Esophagus muscularis mucosa (tissue), 4 donors: ENCODE measurements at regions of chr18 and their contacts with region 1.

Region 1: DNA sequence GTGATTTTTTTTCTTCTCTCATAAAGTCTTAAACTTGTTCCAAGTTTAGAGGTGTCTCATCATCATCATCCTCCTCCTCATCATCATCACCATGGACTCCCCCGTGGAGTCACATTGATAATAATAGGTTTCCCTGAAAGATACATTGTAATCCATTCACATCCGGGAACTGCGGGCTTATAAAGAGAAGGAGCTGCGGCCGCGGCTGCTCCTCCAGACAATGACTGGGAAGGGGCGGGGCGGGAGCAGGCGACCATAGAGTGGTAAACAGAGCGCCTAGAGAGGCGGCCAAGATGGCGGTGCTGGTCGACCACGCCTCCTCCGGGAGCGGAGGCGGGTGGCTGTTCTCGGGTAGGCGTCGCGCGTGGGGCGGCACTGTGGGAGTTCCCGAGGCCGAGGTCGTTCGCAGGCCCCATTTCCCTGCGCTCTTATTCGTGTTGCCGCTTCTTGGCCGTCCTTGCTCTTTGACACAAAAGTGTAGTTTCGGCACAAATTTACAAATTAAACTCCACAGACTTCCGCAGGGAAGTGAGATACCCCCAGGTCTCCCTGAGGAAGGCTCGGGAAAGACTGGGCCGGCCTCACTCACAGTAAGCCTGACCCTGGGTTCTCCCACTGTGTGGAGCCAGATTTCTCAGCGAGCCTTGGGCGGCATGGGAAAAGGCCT is 1.8 kb upstream of the TCF4 start:
- DNase-seq: peak; percentile 99
- H3K4me3 ChIP-seq: peak overlapping the region; percentile 69 to 83 (median 72)
- H3K27ac ChIP-seq: peak overlapping the region; percentile 86 to 91 (median 88)
- H3K4me1 ChIP-seq: peaks cover 0 to 27% (median 24%) of the 10 kb centered on the region in 4 donors
- H3K27me3 ChIP-seq: no peaks in the 10 kb centered on the region
- CTCF ChIP-seq: peak in 1 of 3 experiments; percentile 34
- EP300 ChIP-seq: no peak
- POLR2A ChIP-seq: no peak

Region 2: DNA sequence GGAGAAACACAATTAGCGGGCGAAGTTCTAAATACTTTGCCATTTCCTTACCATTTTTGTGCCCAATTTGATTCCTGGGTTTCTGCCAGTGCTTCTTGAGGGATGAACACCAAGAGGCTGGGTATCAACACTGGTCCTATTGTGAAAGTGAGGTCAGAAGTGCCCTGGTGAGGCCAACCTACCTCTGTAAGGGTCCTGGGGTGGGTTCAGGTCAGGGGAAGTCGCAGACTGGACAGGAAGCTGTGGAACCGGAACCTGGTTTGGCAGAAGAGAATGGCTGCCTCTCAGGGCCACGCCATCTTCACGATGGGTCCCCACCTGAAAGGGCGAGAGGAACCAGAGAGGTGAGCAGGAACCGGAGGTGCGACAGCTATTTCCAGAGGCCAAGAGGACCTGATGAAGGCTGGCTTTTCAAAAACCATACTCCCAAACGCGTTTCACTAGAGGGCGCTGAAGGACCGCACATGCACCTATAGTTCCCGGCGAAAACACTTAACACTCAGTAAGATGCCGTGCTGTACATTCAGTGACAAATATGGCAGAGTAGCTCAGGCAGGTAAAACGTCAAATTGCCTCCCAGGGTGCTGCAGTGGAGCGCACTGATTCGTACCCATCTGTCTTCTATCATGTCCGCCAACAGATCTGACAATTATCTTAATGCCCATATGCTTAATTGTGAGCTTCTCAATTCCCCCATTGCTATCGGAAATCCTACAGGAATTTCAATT is 355.2 kb before region 1 on chr18:
- intact Hi-C with region 1: loop called (anchors 10 kb)
- DNase-seq: peak; percentile 94
- H3K4me3 ChIP-seq: peak overlapping the region in 1 of 4 donors; percentile 33
- H3K27ac ChIP-seq: peak overlapping the region in 3 of 4 donors; percentile 21 to 52 (median 40)
- H3K4me1 ChIP-seq: peaks cover 12 to 22% (median 18%) of the 10 kb centered on the region in 4 donors
- H3K27me3 ChIP-seq: no peaks in the 10 kb centered on the region
- CTCF ChIP-seq: peak; percentile 69 to 79 (median 74)
- EP300 ChIP-seq: no peak
- POLR2A ChIP-seq: no peak

Region 3: DNA sequence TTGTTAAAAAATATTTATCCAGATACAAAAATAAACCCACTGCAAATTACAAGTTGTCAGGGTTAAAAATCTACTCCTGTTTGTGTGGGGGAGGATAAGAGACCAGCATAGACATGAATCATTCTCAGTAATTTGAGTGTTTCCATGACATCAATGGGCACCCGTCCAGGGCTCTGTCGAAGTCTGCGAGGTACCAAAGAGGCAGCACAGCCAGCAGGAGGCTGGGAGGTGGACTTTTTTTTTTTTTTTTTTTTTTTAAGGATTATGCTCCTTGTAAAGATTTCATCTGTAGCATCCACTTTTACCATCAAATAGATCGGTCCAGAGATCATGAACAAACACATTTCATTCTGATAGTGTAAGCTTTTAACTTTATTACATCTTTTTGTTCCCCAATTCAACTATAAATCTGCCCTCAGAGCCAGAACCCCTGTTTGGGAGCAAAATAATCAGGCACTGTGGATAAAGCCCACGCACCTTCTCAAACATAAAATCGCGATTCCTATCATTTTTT is 183.8 kb before region 1 on chr18:
- intact Hi-C with region 1: loop called (anchors 5 kb)
- DNase-seq: no peak
- H3K4me3 ChIP-seq: no peak overlapping the region
- H3K27ac ChIP-seq: peak overlapping the region; percentile 40 to 78 (median 66)
- H3K4me1 ChIP-seq: peaks cover 15 to 41% (median 39%) of the 10 kb centered on the region in 4 donors
- H3K27me3 ChIP-seq: no peaks in the 10 kb centered on the region
- CTCF ChIP-seq: no peak
- EP300 ChIP-seq: no peak
- POLR2A ChIP-seq: no peak

Region 4: DNA sequence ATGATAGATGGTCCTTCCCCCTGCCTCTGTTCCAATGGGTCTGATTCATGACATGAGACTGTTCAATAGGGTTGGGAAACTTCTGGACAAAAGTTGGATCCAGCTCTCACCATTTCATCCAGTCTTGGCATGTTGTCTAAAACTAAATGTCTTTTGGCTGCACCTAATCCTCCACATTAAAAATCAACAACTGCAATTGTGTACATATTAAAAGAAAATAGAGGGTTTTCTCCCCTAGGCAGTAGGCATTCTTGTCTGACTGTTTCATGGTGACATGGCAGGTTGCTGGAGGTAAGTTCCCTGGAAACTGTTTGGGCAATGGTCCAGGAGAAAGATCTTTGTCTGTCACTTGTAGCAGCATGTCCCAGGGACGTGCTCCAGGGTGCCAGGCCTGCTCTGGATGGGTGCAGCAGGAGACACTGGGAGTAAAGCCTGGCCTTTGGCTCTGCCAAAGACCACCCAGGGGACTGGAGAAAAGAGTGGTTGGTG is 137.6 kb before region 1 on chr18:
- intact Hi-C with region 1: no loop called
- DNase-seq: no peak
- H3K4me3 ChIP-seq: no peak overlapping the region
- H3K27ac ChIP-seq: peak overlapping the region in 1 of 4 donors; percentile 3
- H3K4me1 ChIP-seq: peaks cover 5 to 18% (median 11%) of the 10 kb centered on the region in 4 donors
- H3K27me3 ChIP-seq: no peaks in the 10 kb centered on the region
- CTCF ChIP-seq: no peak
- EP300 ChIP-seq: no peak
- POLR2A ChIP-seq: no peak

Region 5: DNA sequence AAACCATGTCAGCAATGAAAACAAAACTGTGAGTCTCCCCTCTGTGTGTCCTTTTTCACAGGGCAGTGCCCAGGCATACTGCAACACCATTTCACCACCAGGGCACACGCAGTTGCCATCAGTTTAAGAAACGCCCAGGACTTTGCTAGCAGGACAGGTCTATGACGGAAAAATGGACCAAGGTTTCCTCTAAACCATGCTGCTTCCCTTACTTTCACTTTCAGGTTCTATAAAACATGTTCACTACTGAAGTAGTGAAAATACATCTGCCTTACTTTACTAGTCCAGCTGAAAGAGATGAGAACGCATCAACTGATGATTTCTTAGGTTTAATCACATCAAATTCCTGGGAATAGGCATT is 112.3 kb before region 1 on chr18:
- intact Hi-C with region 1: loop called (anchors 5 kb)
- DNase-seq: no peak
- H3K4me3 ChIP-seq: peak overlapping the region; percentile 45 to 65 (median 58)
- H3K27ac ChIP-seq: peak overlapping the region; percentile 75 to 80 (median 78)
- H3K4me1 ChIP-seq: peaks cover 0 to 19% (median 13%) of the 10 kb centered on the region in 4 donors
- H3K27me3 ChIP-seq: no peaks in the 10 kb centered on the region
- CTCF ChIP-seq: peak in 1 of 3 experiments; percentile 46
- EP300 ChIP-seq: no peak
- POLR2A ChIP-seq: no peak

Region 6: GRCh38 chr18:56650944-56651770 is 1061.4 kb after region 1 on chr18 and contains the start of gene WDR7:
- intact Hi-C with region 1: loop called (anchors 5 kb)
- DNase-seq: peak; percentile 99
- H3K4me3 ChIP-seq: peak within 1 kb of the TSS; percentile 63 to 93 (median 88)
- H3K27ac ChIP-seq: peak within 1 kb of the TSS; percentile 80 to 92 (median 88)
- H3K4me1 ChIP-seq: peaks cover 16 to 26% (median 21%) of the 10 kb centered on the region in 4 donors
- H3K27me3 ChIP-seq: no peaks in the 10 kb centered on the region
- CTCF ChIP-seq: peak in 1 of 3 experiments; percentile 22
- EP300 ChIP-seq: no peak
- POLR2A ChIP-seq: no peak
- total RNA-seq, gene WDR7: 23.1 to 48.6 (median 30.3) TPM